CD4-positive, alpha-beta T cell (primary cell): ENCODE measurements at regions of chr20 and their contacts with region 1.

Region 1: GRCh38 chr20:3786665-3787323 is at the start of gene CENPB:
- DNase-seq: peak; percentile 70 to 95 (median 90)
- ATAC-seq: peak; percentile 83
- H3K4me3 ChIP-seq: peak within 1 kb of the TSS; percentile 63
- H3K4me3 Mint-ChIP-seq: peak within 1 kb of the TSS; percentile 85
- H3K27ac ChIP-seq: peak within 1 kb of the TSS; percentile 66 to 70
- H3K27ac Mint-ChIP-seq: peak within 1 kb of the TSS; percentile 73
- H3K4me1 ChIP-seq: peaks cover 32% of the 10 kb centered on the region
- H3K4me1 Mint-ChIP-seq: peaks cover 40% of the 10 kb centered on the region
- H3K27me3 ChIP-seq: no peaks in the 10 kb centered on the region
- H3K27me3 Mint-ChIP-seq: no peaks in the 10 kb centered on the region
- CTCF ChIP-seq: peak; percentile 80
- total RNA-seq, gene CENPB: 25.1 to 25.3 TPM

Region 2: DNA sequence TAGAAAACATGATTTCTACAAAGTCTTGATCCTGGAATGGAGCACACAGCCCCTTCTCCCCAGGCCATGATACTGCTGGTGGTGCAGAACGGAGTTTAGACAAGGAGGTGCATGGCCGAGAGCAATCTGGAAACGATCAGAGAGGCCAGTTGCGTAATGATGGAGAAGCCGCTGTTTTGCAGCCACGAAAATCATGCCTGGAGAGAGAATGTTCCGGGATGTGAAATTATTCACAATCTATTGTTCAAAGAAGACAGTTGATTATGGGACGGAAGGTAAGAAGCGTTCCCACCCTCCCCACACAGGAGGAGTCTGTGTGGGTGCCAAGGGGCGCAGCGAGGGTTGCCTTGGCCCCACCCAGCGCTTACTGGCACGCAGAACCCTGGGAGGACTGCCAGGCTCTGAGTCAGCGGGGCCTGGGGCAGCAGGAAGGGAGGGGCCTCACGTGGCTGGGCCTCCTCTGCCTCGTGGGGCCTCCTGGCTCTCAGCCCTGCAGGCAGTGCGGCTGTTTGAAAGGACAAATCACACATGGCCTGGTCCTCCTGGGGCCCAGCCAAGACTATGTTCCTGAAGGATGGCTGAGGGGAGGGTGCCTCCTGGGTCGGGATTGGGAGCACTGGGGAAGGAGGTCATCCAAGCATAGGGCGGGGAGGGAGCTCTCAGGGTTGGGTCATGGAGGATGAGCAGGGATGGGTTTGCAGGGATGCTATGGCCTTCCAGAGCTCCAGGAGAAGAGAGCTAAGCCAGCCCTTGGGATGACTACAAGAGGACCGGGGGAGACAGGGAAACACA is 24.9 kb after region 1 on chr20:
- CTCF ChIA-PET with region 1: interaction called, 20 read pairs
- POLR2A ChIA-PET with region 1: interaction called, 89 read pairs
- intact Hi-C with region 1: no loop called
- DNase-seq: peak; percentile 80 to 98 (median 96)
- ATAC-seq: peak; percentile 91
- H3K4me3 ChIP-seq: peak overlapping the region; percentile 57
- H3K4me3 Mint-ChIP-seq: peak overlapping the region; percentile 77
- H3K27ac ChIP-seq: peak overlapping the region; percentile 82 to 97
- H3K27ac Mint-ChIP-seq: peak overlapping the region; percentile 98
- H3K4me1 ChIP-seq: peaks cover 90% of the 10 kb centered on the region
- H3K4me1 Mint-ChIP-seq: peaks cover 81% of the 10 kb centered on the region
- H3K27me3 ChIP-seq: no peaks in the 10 kb centered on the region
- H3K27me3 Mint-ChIP-seq: no peaks in the 10 kb centered on the region
- CTCF ChIP-seq: no peak

Region 3: DNA sequence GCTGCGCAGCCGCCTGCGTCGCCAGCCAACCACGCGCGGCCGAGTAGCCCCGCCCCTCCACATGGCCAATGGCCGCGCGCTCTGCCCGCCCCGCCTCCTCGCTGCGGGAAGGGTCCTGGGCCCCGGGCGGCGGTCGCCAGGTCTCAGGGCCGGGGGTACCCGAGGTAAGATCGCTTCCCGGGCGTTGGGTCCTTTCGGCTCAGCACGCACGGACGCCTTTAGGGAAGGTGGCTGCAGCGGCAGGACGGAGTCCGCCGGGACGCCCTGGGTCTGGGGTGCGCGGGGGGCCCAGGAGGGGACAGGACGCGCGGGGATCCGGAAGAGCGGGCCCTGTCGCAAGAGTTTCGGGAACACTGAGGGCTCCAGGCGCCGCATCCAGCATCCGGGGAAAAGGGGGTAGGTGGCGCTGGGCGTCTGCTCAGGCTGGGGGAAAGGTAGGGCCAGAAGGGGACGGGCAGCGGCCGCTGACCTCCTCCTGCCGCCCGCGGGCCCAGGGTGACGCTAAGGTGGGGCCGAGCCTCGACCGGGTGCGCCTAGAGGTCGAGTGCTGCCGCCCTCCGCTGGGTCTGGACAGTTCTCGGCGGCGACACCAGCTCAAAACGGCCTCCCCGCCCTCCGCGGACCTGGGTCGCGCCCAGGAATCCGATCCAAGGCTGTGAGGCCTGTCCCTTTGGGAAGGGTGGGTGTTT is 60.1 kb after region 1 on chr20 and contains the start of gene MAVS:
- CTCF ChIA-PET with region 1: interaction called, 6 read pairs
- POLR2A ChIA-PET with region 1: interaction called, 8 read pairs
- intact Hi-C with region 1: loop called in 1 of 2 experiments (anchors 2 kb)
- DNase-seq: peak; percentile 66 to 93 (median 84)
- ATAC-seq: peak; percentile 99
- H3K4me3 ChIP-seq: peak within 1 kb of the TSS; percentile 98
- H3K4me3 Mint-ChIP-seq: peak within 1 kb of the TSS; percentile 95
- H3K27ac ChIP-seq: peak within 1 kb of the TSS; percentile 74 to 75
- H3K27ac Mint-ChIP-seq: peak within 1 kb of the TSS; percentile 92
- H3K4me1 ChIP-seq: peaks cover 27% of the 10 kb centered on the region
- H3K4me1 Mint-ChIP-seq: peaks cover 26% of the 10 kb centered on the region
- H3K27me3 ChIP-seq: no peaks in the 10 kb centered on the region
- H3K27me3 Mint-ChIP-seq: no peaks in the 10 kb centered on the region
- CTCF ChIP-seq: no peak
- total RNA-seq, gene MAVS: 13.6 to 14.7 TPM

Region 4: GRCh38 chr20:3854462-3854871 is 67.7 kb after region 1 on chr20:
- CTCF ChIA-PET with region 1: interaction called, 31 read pairs
- POLR2A ChIA-PET with region 1: interaction called, 8 read pairs
- intact Hi-C with region 1: loop called (anchors 1 kb)
- DNase-seq: no peak
- ATAC-seq: no peak
- H3K4me3 ChIP-seq: no peak overlapping the region
- H3K4me3 Mint-ChIP-seq: no peak overlapping the region
- H3K27ac ChIP-seq: no peak overlapping the region
- H3K27ac Mint-ChIP-seq: no peak overlapping the region
- H3K4me1 ChIP-seq: peaks cover 9% of the 10 kb centered on the region
- H3K4me1 Mint-ChIP-seq: peaks cover 13% of the 10 kb centered on the region
- H3K27me3 ChIP-seq: no peaks in the 10 kb centered on the region
- H3K27me3 Mint-ChIP-seq: no peaks in the 10 kb centered on the region
- CTCF ChIP-seq: no peak